ENCODE measurements at regions of chr3 and their contacts with region 1.

Region 1: GRCh38 chr3:136861890-136862616 is at the start of gene NCK1:
- DNase-seq: peak; percentile 96 to 99 (median 98)
- ATAC-seq: peak; percentile 95
- H3K4me3 ChIP-seq: peak within 1 kb of the TSS; percentile 93
- H3K4me3 Mint-ChIP-seq: peak within 1 kb of the TSS; percentile 92
- H3K27ac ChIP-seq: peak within 1 kb of the TSS; percentile 93 to 94
- H3K27ac Mint-ChIP-seq: peak within 1 kb of the TSS; percentile 97
- H3K4me1 ChIP-seq: peaks cover 37% of the 10 kb centered on the region
- H3K4me1 Mint-ChIP-seq: peaks cover 65% of the 10 kb centered on the region
- H3K27me3 ChIP-seq: no peaks in the 10 kb centered on the region
- H3K27me3 Mint-ChIP-seq: no peaks in the 10 kb centered on the region
- CTCF ChIP-seq: no peak
- total RNA-seq, gene NCK1: 52.9 to 55.0 TPM

Region 2: DNA sequence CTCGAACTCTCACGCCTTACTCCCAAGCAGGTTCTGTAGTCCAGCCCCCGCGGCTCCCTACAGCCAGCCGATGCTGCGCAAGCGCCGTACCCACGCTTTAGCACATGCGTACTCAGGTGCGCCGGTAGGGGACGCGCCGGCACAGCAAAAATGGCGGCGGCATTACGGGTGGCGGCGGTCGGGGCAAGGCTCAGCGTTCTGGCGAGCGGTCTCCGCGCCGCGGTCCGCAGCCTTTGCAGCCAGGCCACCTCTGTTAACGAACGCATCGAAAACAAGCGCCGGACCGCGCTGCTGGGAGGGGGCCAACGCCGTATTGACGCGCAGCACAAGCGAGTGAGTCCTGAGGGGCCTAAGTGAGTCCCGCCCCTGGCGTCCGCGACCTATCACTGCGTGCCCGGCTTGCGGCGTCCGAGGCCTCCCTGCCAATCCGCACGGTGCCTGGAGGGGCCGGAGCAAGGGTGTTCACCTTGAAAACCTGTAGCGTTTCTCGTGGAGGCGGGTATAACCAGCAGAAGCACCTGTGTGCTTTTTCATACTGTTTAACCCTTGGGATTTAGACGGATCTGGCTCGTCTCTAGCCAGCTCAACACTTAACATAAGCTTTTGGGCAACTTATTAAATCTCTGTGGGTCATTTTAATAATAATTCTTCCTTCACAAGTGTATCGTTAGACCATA is 611.7 kb before region 1 on chr3 and contains the start of gene PCCB:
- CTCF ChIA-PET with region 1: no interaction called
- POLR2A ChIA-PET with region 1: interaction called, 5 read pairs
- intact Hi-C with region 1: loop called in 1 of 2 experiments (anchors 5 kb)
- DNase-seq: peak; percentile 85 to 96 (median 90)
- ATAC-seq: peak; percentile 95
- H3K4me3 ChIP-seq: peak within 1 kb of the TSS; percentile 63
- H3K4me3 Mint-ChIP-seq: peak within 1 kb of the TSS; percentile 91
- H3K27ac ChIP-seq: peak within 1 kb of the TSS; percentile 72 to 78
- H3K27ac Mint-ChIP-seq: peak within 1 kb of the TSS; percentile 85
- H3K4me1 ChIP-seq: peaks cover 23% of the 10 kb centered on the region
- H3K4me1 Mint-ChIP-seq: peaks cover 23% of the 10 kb centered on the region
- H3K27me3 ChIP-seq: no peaks in the 10 kb centered on the region
- H3K27me3 Mint-ChIP-seq: no peaks in the 10 kb centered on the region
- CTCF ChIP-seq: peak; percentile 89
- total RNA-seq, gene PCCB: 8.3 to 10.2 TPM

Region 3: DNA sequence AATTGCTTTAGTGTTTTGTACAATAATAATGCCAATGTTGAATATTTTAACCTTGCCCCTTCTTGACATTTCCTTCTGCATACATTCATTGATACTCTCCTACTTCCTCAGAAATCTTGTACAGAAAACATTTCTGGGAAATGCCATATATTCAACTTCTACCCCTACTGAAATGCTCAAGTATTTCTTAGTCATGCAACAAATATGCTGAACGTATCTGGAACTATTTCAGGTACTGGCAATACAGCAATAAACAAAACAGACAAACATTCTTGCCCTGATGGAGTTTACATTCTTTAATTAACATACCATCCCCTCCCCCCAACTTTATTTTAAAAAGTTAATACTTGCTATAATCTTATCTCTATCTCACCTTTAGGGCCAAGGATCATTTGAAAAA is 257.1 kb before region 1 on chr3:
- CTCF ChIA-PET with region 1: no interaction called
- POLR2A ChIA-PET with region 1: no interaction called
- intact Hi-C with region 1: no loop called
- DNase-seq: no peak
- ATAC-seq: no peak
- H3K4me3 ChIP-seq: no peak overlapping the region
- H3K4me3 Mint-ChIP-seq: no peak overlapping the region
- H3K27ac ChIP-seq: no peak overlapping the region
- H3K27ac Mint-ChIP-seq: peak overlapping the region; percentile 24
- H3K4me1 ChIP-seq: no peaks in the 10 kb centered on the region
- H3K4me1 Mint-ChIP-seq: peaks cover 11% of the 10 kb centered on the region
- H3K27me3 ChIP-seq: no peaks in the 10 kb centered on the region
- H3K27me3 Mint-ChIP-seq: no peaks in the 10 kb centered on the region
- CTCF ChIP-seq: no peak

Region 4: GRCh38 chr3:136642745-136643144 is 219.3 kb before region 1 on chr3:
- CTCF ChIA-PET with region 1: no interaction called
- POLR2A ChIA-PET with region 1: no interaction called
- intact Hi-C with region 1: no loop called
- DNase-seq: no peak
- ATAC-seq: no peak
- H3K4me3 ChIP-seq: no peak overlapping the region
- H3K4me3 Mint-ChIP-seq: no peak overlapping the region
- H3K27ac ChIP-seq: no peak overlapping the region
- H3K27ac Mint-ChIP-seq: no peak overlapping the region
- H3K4me1 ChIP-seq: no peaks in the 10 kb centered on the region
- H3K4me1 Mint-ChIP-seq: peaks cover 57% of the 10 kb centered on the region
- H3K27me3 ChIP-seq: no peaks in the 10 kb centered on the region
- H3K27me3 Mint-ChIP-seq: no peaks in the 10 kb centered on the region
- CTCF ChIP-seq: no peak

Region 5: GRCh38 chr3:136899622-136900158 is 37.6 kb after region 1 on chr3:
- CTCF ChIA-PET with region 1: no interaction called
- POLR2A ChIA-PET with region 1: interaction called, 15 read pairs
- intact Hi-C with region 1: loop called (anchors 5 kb)
- DNase-seq: peak in 2 of 14 experiments; percentile 19 to 25
- ATAC-seq: no peak
- H3K4me3 ChIP-seq: no peak overlapping the region
- H3K4me3 Mint-ChIP-seq: peak overlapping the region; percentile 26
- H3K27ac ChIP-seq: no peak overlapping the region
- H3K27ac Mint-ChIP-seq: peak overlapping the region; percentile 52
- H3K4me1 ChIP-seq: peaks cover 14% of the 10 kb centered on the region
- H3K4me1 Mint-ChIP-seq: peaks cover 65% of the 10 kb centered on the region
- H3K27me3 ChIP-seq: no peaks in the 10 kb centered on the region
- H3K27me3 Mint-ChIP-seq: no peaks in the 10 kb centered on the region
- CTCF ChIP-seq: no peak

Region 6: DNA sequence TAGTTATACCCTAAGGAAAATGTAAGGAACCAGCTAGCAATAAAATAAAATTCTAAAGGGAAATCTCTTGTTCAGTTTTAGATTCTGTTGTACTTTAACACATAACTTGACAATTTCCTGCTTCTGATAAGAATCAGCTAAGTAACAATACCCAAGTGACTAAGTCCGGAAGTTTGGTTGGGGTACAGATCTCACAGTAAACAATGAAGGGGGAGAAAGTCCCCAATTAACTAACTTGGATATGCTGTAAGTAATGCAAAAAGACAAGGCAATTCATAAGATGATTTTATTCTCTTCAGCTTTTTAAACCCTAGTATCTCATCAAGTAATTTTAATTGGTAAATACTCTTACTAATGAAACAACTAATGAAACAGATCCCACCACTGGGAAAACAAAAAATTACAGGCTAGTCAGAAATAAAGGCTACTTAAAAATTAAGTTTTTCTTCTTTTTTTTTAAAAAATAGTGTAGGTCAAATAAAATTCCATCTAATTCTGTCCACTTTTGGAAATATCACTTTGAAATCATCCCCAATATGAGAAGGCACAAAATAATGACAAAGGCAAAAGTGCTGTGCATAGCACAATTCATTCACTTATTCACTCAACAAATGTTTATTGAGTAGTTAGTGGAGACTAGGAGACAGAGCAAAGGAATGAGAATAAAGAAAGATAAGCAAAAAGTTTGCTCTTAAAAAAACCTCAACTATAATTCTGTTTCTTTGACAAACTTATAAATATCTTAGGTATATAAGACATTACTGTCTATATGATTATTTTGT is 57.9 kb after region 1 on chr3:
- CTCF ChIA-PET with region 1: interaction called, 5 read pairs
- POLR2A ChIA-PET with region 1: interaction called, 28 read pairs
- intact Hi-C with region 1: loop called (anchors 5 kb)
- DNase-seq: peak in 5 of 14 experiments; percentile 4 to 85 (median 79)
- ATAC-seq: peak; percentile 93
- H3K4me3 ChIP-seq: peak overlapping the region; percentile 1
- H3K4me3 Mint-ChIP-seq: peak overlapping the region; percentile 43
- H3K27ac ChIP-seq: peak overlapping the region; percentile 39 to 54
- H3K27ac Mint-ChIP-seq: peak overlapping the region; percentile 76
- H3K4me1 ChIP-seq: peaks cover 23% of the 10 kb centered on the region
- H3K4me1 Mint-ChIP-seq: peaks cover 88% of the 10 kb centered on the region
- H3K27me3 ChIP-seq: no peaks in the 10 kb centered on the region
- H3K27me3 Mint-ChIP-seq: no peaks in the 10 kb centered on the region
- CTCF ChIP-seq: no peak

Region 7: GRCh38 chr3:136938334-136938733 is 76.3 kb after region 1 on chr3:
- CTCF ChIA-PET with region 1: interaction called, 4 read pairs
- POLR2A ChIA-PET with region 1: interaction called, 3 read pairs
- intact Hi-C with region 1: loop called in 1 of 2 experiments (anchors 5 kb)
- DNase-seq: peak in 1 of 14 experiments; percentile 12
- ATAC-seq: no peak
- H3K4me3 ChIP-seq: no peak overlapping the region
- H3K4me3 Mint-ChIP-seq: no peak overlapping the region
- H3K27ac ChIP-seq: no peak overlapping the region
- H3K27ac Mint-ChIP-seq: no peak overlapping the region
- H3K4me1 ChIP-seq: peaks cover 19% of the 10 kb centered on the region
- H3K4me1 Mint-ChIP-seq: peaks cover 85% of the 10 kb centered on the region
- H3K27me3 ChIP-seq: no peaks in the 10 kb centered on the region
- H3K27me3 Mint-ChIP-seq: no peaks in the 10 kb centered on the region
- CTCF ChIP-seq: no peak